Activated CD8-positive, alpha-beta T cell treated with anti-CD3 and anti-CD28 coated beads for 36 hours (primary cell): ENCODE measurements at regions of chr14 and their contacts with region 1.

Region 1: GRCh38 chr14:67619446-67620216 is at the start of gene ARG2:
- DNase-seq: peak; percentile 98
- ATAC-seq: peak; percentile 92
- H3K4me3 Mint-ChIP-seq: peak within 1 kb of the TSS; percentile 83
- H3K27ac Mint-ChIP-seq: peak within 1 kb of the TSS; percentile 78
- H3K4me1 Mint-ChIP-seq: peaks cover 27% of the 10 kb centered on the region
- H3K27me3 Mint-ChIP-seq: peaks cover 12% of the 10 kb centered on the region
- CTCF ChIP-seq: no peak
- total RNA-seq, gene ARG2: 9.9 TPM

Region 2: GRCh38 chr14:67599698-67600561 is 19.7 kb before region 1 on chr14 and contains the start of gene PIGH:
- CTCF ChIA-PET with region 1: interaction called, 27 read pairs
- POLR2A ChIA-PET with region 1: interaction called, 8 read pairs
- intact Hi-C with region 1: no loop called
- DNase-seq: peak; percentile 95
- ATAC-seq: peak; percentile 100
- H3K4me3 Mint-ChIP-seq: peak within 1 kb of the TSS; percentile 89
- H3K27ac Mint-ChIP-seq: peak within 1 kb of the TSS; percentile 94
- H3K4me1 Mint-ChIP-seq: peaks cover 41% of the 10 kb centered on the region
- H3K27me3 Mint-ChIP-seq: no peaks in the 10 kb centered on the region
- CTCF ChIP-seq: peak; percentile 44
- total RNA-seq, gene PIGH: 20.3 to 21.9 TPM

Region 3: DNA sequence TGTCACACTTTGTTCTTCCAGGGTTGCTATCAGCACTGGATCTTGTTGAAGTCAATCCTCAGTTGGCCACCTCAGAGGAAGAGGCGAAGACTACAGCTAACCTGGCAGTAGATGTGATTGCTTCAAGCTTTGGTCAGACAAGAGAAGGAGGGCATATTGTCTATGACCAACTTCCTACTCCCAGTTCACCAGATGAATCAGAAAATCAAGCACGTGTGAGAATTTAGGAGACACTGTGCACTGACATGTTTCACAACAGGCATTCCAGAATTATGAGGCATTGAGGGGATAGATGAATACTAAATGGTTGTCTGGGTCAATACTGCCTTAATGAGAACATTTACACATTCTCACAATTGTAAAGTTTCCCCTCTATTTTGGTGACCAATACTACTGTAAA is 31.1 kb after region 1 on chr14:
- CTCF ChIA-PET with region 1: interaction called, 10 read pairs
- POLR2A ChIA-PET with region 1: no interaction called
- intact Hi-C with region 1: no loop called
- DNase-seq: no peak
- ATAC-seq: no peak
- H3K4me3 Mint-ChIP-seq: no peak overlapping the region
- H3K27ac Mint-ChIP-seq: no peak overlapping the region
- H3K4me1 Mint-ChIP-seq: no peaks in the 10 kb centered on the region
- H3K27me3 Mint-ChIP-seq: no peaks in the 10 kb centered on the region
- CTCF ChIP-seq: no peak

Region 4: DNA sequence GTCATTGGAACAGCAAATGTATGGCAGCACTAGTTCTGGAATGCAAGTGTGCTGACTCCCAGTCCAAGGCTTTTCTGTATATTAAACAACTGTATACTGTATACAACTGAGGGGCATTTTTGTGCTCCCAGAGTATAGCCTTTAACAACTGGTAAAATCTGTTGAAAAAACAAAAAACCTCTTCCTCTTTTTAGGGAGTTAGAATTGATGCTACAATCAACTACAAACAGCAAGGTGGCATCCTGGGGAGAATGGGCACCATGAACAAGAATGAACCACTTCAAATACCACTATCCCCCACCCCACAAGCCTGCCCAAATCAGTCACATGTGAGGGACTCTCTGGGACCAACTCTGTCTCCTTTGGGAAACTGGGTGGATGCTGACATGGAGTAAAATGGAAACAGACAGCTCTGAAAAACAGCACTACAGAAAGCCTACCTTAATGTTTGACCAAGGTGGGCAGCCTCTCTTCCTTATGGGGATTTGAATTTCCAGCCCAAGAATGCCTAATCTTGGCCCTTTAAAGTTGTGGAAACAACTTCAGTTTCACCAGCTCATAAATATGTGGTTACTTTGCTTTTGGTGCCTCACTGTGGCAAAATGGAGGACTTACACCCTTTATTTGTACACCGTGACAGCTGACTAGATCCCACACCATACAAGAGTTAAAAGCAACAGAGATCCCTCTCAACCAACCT is 47.3 kb after region 1 on chr14:
- CTCF ChIA-PET with region 1: interaction called, 79 read pairs
- POLR2A ChIA-PET with region 1: interaction called, 3 read pairs
- intact Hi-C with region 1: loop called (anchors 2 kb)
- DNase-seq: peak; percentile 44
- ATAC-seq: peak; percentile 87
- H3K4me3 Mint-ChIP-seq: no peak overlapping the region
- H3K27ac Mint-ChIP-seq: peak overlapping the region; percentile 61
- H3K4me1 Mint-ChIP-seq: peaks cover 53% of the 10 kb centered on the region
- H3K27me3 Mint-ChIP-seq: no peaks in the 10 kb centered on the region
- CTCF ChIP-seq: peak; percentile 47

Region 5: DNA sequence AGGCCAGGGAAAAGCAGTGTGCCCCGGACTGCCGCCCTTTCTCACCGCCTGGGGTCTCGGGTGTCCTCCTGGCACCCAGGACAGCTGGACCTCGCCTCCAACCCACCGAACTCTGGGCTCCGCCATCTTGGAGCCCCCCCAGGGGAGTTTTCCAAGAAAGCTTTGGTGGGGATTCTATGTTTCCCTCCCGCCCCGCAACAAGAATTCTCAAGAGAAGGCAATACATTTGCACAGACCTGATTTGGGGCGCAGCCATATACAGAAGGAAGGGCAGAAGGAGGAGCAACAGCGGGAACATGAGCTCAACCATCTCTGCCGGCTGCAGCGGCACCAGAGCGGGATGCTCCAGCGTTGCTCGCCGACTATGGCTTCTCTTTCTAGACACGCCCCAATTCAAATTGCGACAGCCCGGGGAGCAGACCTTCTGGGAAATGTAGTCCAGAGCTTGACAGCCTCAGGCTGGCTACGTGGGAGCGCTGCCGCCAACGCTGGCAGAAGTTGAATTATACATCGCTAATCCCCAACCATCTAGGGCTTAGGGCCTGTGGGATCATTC is 75.8 kb after region 1 on chr14 and contains the start of gene RDH11:
- CTCF ChIA-PET with region 1: interaction called, 119 read pairs
- POLR2A ChIA-PET with region 1: no interaction called
- intact Hi-C with region 1: no loop called
- DNase-seq: peak; percentile 90
- ATAC-seq: peak; percentile 89
- H3K4me3 Mint-ChIP-seq: peak within 1 kb of the TSS; percentile 85
- H3K27ac Mint-ChIP-seq: peak within 1 kb of the TSS; percentile 95
- H3K4me1 Mint-ChIP-seq: peaks cover 24% of the 10 kb centered on the region
- H3K27me3 Mint-ChIP-seq: no peaks in the 10 kb centered on the region
- CTCF ChIP-seq: no peak
- total RNA-seq, gene RDH11: 78.9 to 83.2 TPM

Region 6: GRCh38 chr14:67722293-67722692 is 102.7 kb after region 1 on chr14:
- CTCF ChIA-PET with region 1: no interaction called
- POLR2A ChIA-PET with region 1: no interaction called
- intact Hi-C with region 1: no loop called
- DNase-seq: no peak
- ATAC-seq: no peak
- H3K4me3 Mint-ChIP-seq: no peak overlapping the region
- H3K27ac Mint-ChIP-seq: no peak overlapping the region
- H3K4me1 Mint-ChIP-seq: no peaks in the 10 kb centered on the region
- H3K27me3 Mint-ChIP-seq: peaks cover 35% of the 10 kb centered on the region
- CTCF ChIP-seq: no peak